Left colon (tissue), 2 donors: ENCODE measurements at regions of chr9 and their contacts with region 1.

Region 1: GRCh38 chr9:4740638-4741364 is at the start of gene AK3:
- DNase-seq: peak; percentile 91 to 92
- ATAC-seq: peak; percentile 83
- total RNA-seq, gene AK3: 89.1 to 95.7 TPM

Region 2: GRCh38 chr9:4662108-4662988 is 78.5 kb before region 1 on chr9 and contains the start of gene PLPP6:
- intact Hi-C with region 1: loop called in 1 of 2 experiments (anchors 5 kb)
- DNase-seq: peak; percentile 90 to 92
- ATAC-seq: peak; percentile 91
- total RNA-seq, gene PLPP6: 15.9 to 22.3 TPM

Region 3: GRCh38 chr9:4679268-4680172 is 61.3 kb before region 1 on chr9 and contains the start of gene CDC37L1:
- intact Hi-C with region 1: loop called in 1 of 2 experiments (anchors 10 kb)
- DNase-seq: peak; percentile 97 to 100
- ATAC-seq: peak; percentile 94
- total RNA-seq, gene CDC37L1: 11.9 to 14.7 TPM